CD8-positive, alpha-beta memory T cell (primary cell): ENCODE measurements at regions of chr4 and their contacts with region 1.

Region 1: GRCh38 chr4:52659001-52659721 is at the start of gene USP46:
- DNase-seq: peak; percentile 12 to 61 (median 39)
- H3K4me3 ChIP-seq: peak within 1 kb of the TSS; percentile 76
- H3K4me3 Mint-ChIP-seq: peak within 1 kb of the TSS; percentile 88 to 95 (median 92)
- H3K27ac ChIP-seq: peak within 1 kb of the TSS; percentile 47
- H3K27ac Mint-ChIP-seq: peak within 1 kb of the TSS; percentile 50 to 94 (median 82)
- H3K4me1 ChIP-seq: peaks cover 9% of the 10 kb centered on the region
- H3K4me1 Mint-ChIP-seq: peaks cover 30 to 53% (median 49%) of the 10 kb centered on the region in 3 donors
- H3K27me3 ChIP-seq: no peaks in the 10 kb centered on the region
- H3K27me3 Mint-ChIP-seq: no peaks in the 10 kb centered on the region
- total RNA-seq, gene USP46: 15.6 to 16.9 TPM

Region 2: DNA sequence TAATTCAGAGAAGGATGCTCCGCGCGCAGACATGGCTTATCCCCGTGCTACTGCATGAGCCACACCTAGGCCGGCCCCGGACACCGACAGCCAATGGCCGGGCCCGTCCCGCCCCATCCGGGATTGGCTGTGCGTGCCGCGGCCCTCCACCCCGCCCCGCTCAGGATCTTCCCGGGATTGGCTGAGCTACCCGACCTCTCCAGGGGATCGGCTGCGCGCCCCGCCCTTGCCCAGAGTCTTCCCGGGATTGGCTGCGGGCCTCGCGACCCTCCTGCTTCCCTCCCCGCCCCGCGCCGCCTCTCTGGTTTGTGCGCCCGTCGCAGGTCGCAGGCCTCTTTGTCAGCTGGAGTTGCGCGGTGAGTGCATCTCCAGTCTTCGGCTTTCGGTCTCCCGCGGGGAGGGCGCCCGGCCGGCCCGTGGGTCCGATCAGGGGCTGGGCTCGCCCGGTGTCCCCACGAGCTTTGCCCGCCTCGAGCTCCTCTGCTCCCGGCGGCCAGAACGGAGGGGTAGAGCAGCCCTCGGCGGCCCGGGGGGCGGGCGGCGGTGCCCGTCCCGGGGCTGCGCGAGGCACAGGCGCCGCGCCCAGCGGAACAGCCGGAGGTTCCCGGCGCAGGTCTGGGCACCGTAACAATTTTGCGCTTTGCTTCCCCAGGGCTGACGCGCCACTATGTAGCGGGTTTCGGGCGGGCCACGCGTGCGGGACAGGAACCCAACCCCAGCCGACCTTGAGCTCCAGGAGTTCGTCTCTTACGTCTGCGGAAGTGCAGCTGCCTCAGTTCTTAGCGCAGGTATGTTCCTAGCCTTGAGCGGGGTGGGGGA is 53.2 kb after region 1 on chr4:
- CTCF ChIA-PET with region 1: interaction called, 3 read pairs
- POLR2A ChIA-PET with region 1: interaction called, 10 read pairs
- DNase-seq: peak; percentile 95 to 97 (median 97)
- H3K4me3 ChIP-seq: peak overlapping the region; percentile 79
- H3K4me3 Mint-ChIP-seq: peak overlapping the region; percentile 93 to 96 (median 94)
- H3K27ac ChIP-seq: peak overlapping the region; percentile 94
- H3K27ac Mint-ChIP-seq: peak overlapping the region; percentile 92 to 97 (median 96)
- H3K4me1 ChIP-seq: peaks cover 38% of the 10 kb centered on the region
- H3K4me1 Mint-ChIP-seq: peaks cover 43 to 58% (median 47%) of the 10 kb centered on the region in 3 donors
- H3K27me3 ChIP-seq: no peaks in the 10 kb centered on the region
- H3K27me3 Mint-ChIP-seq: no peaks in the 10 kb centered on the region

Region 3: GRCh38 chr4:52837726-52838558 is 178.8 kb after region 1 on chr4:
- CTCF ChIA-PET with region 1: no interaction called
- POLR2A ChIA-PET with region 1: no interaction called
- DNase-seq: no peak
- H3K4me3 ChIP-seq: no peak overlapping the region
- H3K4me3 Mint-ChIP-seq: no peak overlapping the region
- H3K27ac ChIP-seq: no peak overlapping the region
- H3K27ac Mint-ChIP-seq: no peak overlapping the region
- H3K4me1 ChIP-seq: no peaks in the 10 kb centered on the region
- H3K4me1 Mint-ChIP-seq: no peaks in the 10 kb centered on the region
- H3K27me3 ChIP-seq: no peaks in the 10 kb centered on the region
- H3K27me3 Mint-ChIP-seq: peaks cover 8 to 16% of the 10 kb centered on the region in 2 donors